A673 (cell line): ENCODE measurements at regions of chr13 and their contacts with region 1.

Region 1: DNA sequence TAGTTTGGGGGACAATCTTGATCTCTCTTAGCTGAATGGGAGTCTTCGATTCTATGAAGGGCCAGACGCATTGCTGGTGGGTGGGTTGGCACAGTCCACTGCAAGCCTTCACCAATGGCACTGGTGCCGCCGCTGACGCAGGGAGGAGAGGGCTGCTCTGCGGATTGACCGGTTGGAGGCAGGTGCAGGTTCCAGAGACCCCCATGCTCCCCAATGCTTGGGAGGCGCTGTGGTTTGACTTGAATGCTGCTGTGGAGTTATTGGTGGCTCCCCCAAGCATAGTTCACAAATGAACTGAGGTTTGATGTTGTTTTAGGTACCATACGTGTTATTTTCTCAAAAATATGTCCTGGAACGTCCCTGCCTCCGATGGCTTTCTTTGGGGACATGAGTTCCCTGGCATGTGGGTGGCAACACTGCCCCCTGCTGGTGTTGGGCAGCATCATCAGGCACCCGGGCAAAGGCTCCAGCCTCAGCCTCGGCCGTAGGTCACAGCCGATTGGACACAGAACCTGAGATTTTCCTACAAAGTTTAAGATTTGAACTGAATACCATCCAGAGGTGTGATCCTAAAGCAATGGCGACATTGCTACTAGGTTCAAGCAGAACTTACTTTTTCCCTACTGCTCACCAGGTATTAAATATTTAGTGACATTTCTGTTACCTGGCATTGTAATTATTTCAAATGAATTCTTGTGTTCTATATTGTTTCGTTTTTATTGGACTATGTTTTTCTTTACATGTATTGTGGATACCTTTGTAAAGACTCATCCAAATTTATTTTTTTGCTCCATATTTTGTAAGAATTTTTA is 95.5 kb downstream of the ANKRD10 start:
- DNase-seq: peak; percentile 78
- H3K4me3 ChIP-seq: no peak overlapping the region
- H3K27ac ChIP-seq: no peak overlapping the region
- H3K4me1 ChIP-seq: no peaks in the 10 kb centered on the region
- H3K27me3 ChIP-seq: no peaks in the 10 kb centered on the region
- CTCF ChIP-seq: peak; percentile 97

Region 2: DNA sequence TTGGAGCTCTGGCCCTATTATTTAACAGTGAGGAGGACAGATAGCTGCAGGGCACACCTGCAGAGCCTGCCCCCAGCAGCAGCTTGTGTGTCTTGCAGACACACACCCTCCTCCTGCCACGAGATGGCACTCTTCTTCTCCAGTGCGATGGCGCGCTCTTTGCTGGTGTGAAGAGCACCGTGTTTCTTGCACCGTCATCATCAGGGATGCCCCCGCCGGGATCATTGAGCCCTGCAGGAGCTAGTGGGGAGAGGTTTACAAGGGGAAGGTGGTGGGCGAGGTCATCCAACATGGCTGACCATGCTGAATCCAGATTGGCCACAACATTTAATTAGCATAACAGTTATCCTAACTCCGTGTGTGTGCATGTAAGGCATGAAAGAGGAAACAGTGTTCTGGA is 363.5 kb before region 1 on chr13:
- CTCF ChIA-PET with region 1: no interaction called
- POLR2A ChIA-PET with region 1: no interaction called
- intact Hi-C with region 1: loop called (anchors 2 kb)
- DNase-seq: peak; percentile 91
- H3K4me3 ChIP-seq: no peak overlapping the region
- H3K27ac ChIP-seq: peak overlapping the region; percentile 2
- H3K4me1 ChIP-seq: no peaks in the 10 kb centered on the region
- H3K27me3 ChIP-seq: no peaks in the 10 kb centered on the region
- CTCF ChIP-seq: peak; percentile 94

Region 3: GRCh38 chr13:110593430-110594130 is 225.8 kb before region 1 on chr13:
- CTCF ChIA-PET with region 1: interaction called, 3 read pairs
- POLR2A ChIA-PET with region 1: no interaction called
- intact Hi-C with region 1: loop called (anchors 1 kb)
- DNase-seq: peak; percentile 80
- H3K4me3 ChIP-seq: no peak overlapping the region
- H3K27ac ChIP-seq: no peak overlapping the region
- H3K4me1 ChIP-seq: no peaks in the 10 kb centered on the region
- H3K27me3 ChIP-seq: no peaks in the 10 kb centered on the region
- CTCF ChIP-seq: peak; percentile 78

Region 4: DNA sequence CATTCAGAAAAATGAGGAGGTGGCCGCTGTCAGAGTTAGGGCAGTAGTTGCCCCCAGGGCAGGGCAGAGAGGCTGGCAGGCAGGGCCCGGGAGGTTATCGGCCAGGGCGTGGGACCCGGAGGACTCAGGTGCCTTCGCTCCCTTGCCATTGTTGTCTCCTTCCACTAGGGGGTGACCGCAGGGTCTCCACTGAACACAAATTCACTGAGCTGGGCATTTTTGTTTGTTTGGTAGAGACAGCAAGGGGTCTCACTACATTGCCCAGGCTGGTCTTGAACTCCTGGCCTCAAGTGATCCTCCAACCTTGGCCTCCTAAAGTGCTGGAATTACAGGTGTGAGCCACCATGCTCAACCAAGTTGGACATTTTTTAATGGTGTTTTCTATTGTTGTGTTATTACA is 138.6 kb before region 1 on chr13:
- CTCF ChIA-PET with region 1: interaction called, 3 read pairs
- POLR2A ChIA-PET with region 1: no interaction called
- intact Hi-C with region 1: loop called (anchors 5 kb)
- DNase-seq: peak; percentile 50
- H3K4me3 ChIP-seq: no peak overlapping the region
- H3K27ac ChIP-seq: no peak overlapping the region
- H3K4me1 ChIP-seq: no peaks in the 10 kb centered on the region
- H3K27me3 ChIP-seq: no peaks in the 10 kb centered on the region
- CTCF ChIP-seq: peak; percentile 47

Region 5: GRCh38 chr13:110715395-110716235 is 103.8 kb before region 1 on chr13:
- CTCF ChIA-PET with region 1: no interaction called
- POLR2A ChIA-PET with region 1: no interaction called
- intact Hi-C with region 1: loop called (anchors 1 kb)
- DNase-seq: peak; percentile 100
- H3K4me3 ChIP-seq: peak overlapping the region; percentile 95
- H3K27ac ChIP-seq: peak overlapping the region; percentile 99
- H3K4me1 ChIP-seq: peaks cover 4% of the 10 kb centered on the region
- H3K27me3 ChIP-seq: no peaks in the 10 kb centered on the region
- CTCF ChIP-seq: peak; percentile 28; the same call in 1 of the 2 replicates

Region 6: GRCh38 chr13:110915057-110915873 is 95.9 kb after region 1 on chr13 and contains the start of gene ANKRD10:
- CTCF ChIA-PET with region 1: no interaction called
- POLR2A ChIA-PET with region 1: no interaction called
- intact Hi-C with region 1: no loop called
- DNase-seq: peak; percentile 98
- H3K4me3 ChIP-seq: peak within 1 kb of the TSS; percentile 99
- H3K27ac ChIP-seq: peak within 1 kb of the TSS; percentile 98
- H3K4me1 ChIP-seq: peaks cover 10% of the 10 kb centered on the region
- H3K27me3 ChIP-seq: no peaks in the 10 kb centered on the region
- CTCF ChIP-seq: peak; percentile 80
- total RNA-seq, gene ANKRD10: 91.1 and 96.2 TPM in 2 replicates